ENCODE measurements at regions of chr1 and their contacts with region 1.

Region 1: GRCh38 chr1:43358746-43359693 is at the start of gene CDC20:
- DNase-seq: peak; percentile 93 to 99
- H3K4me3 ChIP-seq: peak within 1 kb of the TSS; percentile 76 to 92 (median 87)
- H3K27ac ChIP-seq: peak within 1 kb of the TSS; percentile 87
- H3K4me1 ChIP-seq: peaks cover 5 to 14% (median 8%) of the 10 kb centered on the region in 4 experiments
- H3K27me3 ChIP-seq: no peaks in the 10 kb centered on the region
- CTCF ChIP-seq: no peak
- EP300 ChIP-seq: peak in 1 of 2 experiments; percentile 40; a peak in 1 of 3 replicates
- POLR2A ChIP-seq: peak; percentile 93 to 95
- RAD21 ChIP-seq: no peak
- total RNA-seq, gene CDC20: 221 and 252 TPM in 2 replicates

Region 2: DNA sequence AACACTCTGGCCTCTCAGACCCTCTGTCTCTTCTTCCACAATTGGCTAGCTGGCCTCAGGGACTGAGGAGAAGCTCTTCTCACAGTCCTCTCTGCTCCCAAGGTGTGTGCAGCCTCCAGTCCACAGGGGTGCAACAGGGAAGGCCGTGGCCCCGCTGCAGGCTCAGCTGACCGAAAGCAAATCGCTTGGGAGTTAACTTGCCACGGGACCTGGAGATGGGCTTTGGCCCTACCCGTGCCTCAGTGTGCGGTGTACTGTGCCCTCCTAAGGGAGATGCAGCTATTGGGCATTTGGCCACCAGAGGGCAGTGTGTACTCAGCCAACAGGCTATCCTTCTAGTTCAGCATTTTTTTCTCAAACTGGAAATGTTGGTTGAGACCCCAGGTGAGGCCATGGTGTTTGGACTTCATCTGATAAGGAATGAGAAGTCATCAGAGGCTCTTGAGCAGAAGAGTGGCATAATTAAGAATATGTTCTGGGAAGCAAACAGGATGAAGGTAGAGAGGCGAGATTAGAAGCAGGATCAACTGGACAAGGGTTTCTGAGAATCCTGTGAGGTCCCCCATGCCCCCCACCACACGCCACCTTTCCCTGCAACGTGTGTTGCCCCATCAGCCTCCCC is 131.8 kb before region 1 on chr1:
- CTCF ChIA-PET with region 1: interaction called, 11 read pairs
- POLR2A ChIA-PET with region 1: interaction called, 9 read pairs
- DNase-seq: peak; percentile 80 to 98
- H3K4me3 ChIP-seq: no peak overlapping the region
- H3K27ac ChIP-seq: no peak overlapping the region
- H3K4me1 ChIP-seq: peaks cover 0 to 5% (median 3%) of the 10 kb centered on the region in 4 experiments; a peak in 3 of 7 replicates
- H3K27me3 ChIP-seq: no peaks in the 10 kb centered on the region
- CTCF ChIP-seq: peak; percentile 89 to 99 (median 93)
- EP300 ChIP-seq: no peak
- POLR2A ChIP-seq: no peak
- RAD21 ChIP-seq: peak; percentile 99 to 100

Region 3: GRCh38 chr1:43274125-43274803 is 84.8 kb before region 1 on chr1:
- CTCF ChIA-PET with region 1: interaction called, 5 read pairs
- POLR2A ChIA-PET with region 1: interaction called, 13 read pairs
- DNase-seq: no peak
- H3K4me3 ChIP-seq: no peak overlapping the region
- H3K27ac ChIP-seq: no peak overlapping the region
- H3K4me1 ChIP-seq: peaks cover 0 to 11% (median 5%) of the 10 kb centered on the region in 4 experiments; a peak in 5 of 7 replicates
- H3K27me3 ChIP-seq: no peaks in the 10 kb centered on the region
- CTCF ChIP-seq: no peak
- EP300 ChIP-seq: no peak
- POLR2A ChIP-seq: no peak
- RAD21 ChIP-seq: no peak

Region 4: GRCh38 chr1:43329995-43330751 is 28.8 kb before region 1 on chr1:
- CTCF ChIA-PET with region 1: interaction called, 4 read pairs
- POLR2A ChIA-PET with region 1: interaction called, 12 read pairs
- DNase-seq: no peak
- H3K4me3 ChIP-seq: no peak overlapping the region
- H3K27ac ChIP-seq: no peak overlapping the region
- H3K4me1 ChIP-seq: peaks cover 0 to 8% (median 3%) of the 10 kb centered on the region in 4 experiments; a peak in 3 of 7 replicates
- H3K27me3 ChIP-seq: no peaks in the 10 kb centered on the region
- CTCF ChIP-seq: no peak
- EP300 ChIP-seq: no peak
- POLR2A ChIP-seq: no peak
- RAD21 ChIP-seq: no peak

Region 5: DNA sequence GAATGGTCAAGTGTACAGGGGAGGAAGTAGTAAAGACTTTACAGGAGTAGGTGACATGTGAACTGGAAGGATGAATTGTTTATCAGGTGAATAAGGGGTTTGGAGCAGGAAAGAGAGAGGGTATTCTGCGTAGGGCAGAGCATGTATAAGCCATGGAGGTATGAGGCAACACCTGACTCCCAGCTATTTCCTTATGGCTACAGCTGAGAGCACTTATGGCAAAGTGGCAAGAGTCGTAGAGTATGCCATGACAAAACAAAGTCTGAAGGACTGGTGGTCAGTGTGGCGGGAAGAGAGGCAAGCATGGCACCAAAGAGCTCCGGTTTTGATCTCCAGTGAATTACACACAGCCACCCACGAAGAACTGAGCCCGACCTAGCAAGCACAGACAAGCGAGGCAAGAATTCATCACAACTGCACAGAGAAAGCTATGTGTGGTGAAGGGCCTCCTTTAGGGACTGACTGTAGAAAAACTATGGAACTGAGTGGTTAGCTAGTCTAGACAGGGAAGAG is 17.8 kb after region 1 on chr1:
- CTCF ChIA-PET with region 1: interaction called, 5 read pairs
- POLR2A ChIA-PET with region 1: interaction called, 14 read pairs
- DNase-seq: no peak
- H3K4me3 ChIP-seq: no peak overlapping the region
- H3K27ac ChIP-seq: no peak overlapping the region
- H3K4me1 ChIP-seq: no peaks in the 10 kb centered on the region
- H3K27me3 ChIP-seq: no peaks in the 10 kb centered on the region
- CTCF ChIP-seq: no peak
- EP300 ChIP-seq: no peak
- POLR2A ChIP-seq: no peak
- RAD21 ChIP-seq: no peak